AG04450 (cell line): ENCODE measurements at regions of chr10 and their contacts with region 1.

Region 1: GRCh38 chr10:110901954-110902819 is 16.8 kb downstream of the BBIP1 start:
- DNase-seq: no peak
- H3K4me3 ChIP-seq: no peak overlapping the region
- H3K27ac ChIP-seq: peak overlapping the region; percentile 21
- H3K27me3 ChIP-seq: no peaks in the 10 kb centered on the region
- CTCF ChIP-seq: no peak

Region 2: DNA sequence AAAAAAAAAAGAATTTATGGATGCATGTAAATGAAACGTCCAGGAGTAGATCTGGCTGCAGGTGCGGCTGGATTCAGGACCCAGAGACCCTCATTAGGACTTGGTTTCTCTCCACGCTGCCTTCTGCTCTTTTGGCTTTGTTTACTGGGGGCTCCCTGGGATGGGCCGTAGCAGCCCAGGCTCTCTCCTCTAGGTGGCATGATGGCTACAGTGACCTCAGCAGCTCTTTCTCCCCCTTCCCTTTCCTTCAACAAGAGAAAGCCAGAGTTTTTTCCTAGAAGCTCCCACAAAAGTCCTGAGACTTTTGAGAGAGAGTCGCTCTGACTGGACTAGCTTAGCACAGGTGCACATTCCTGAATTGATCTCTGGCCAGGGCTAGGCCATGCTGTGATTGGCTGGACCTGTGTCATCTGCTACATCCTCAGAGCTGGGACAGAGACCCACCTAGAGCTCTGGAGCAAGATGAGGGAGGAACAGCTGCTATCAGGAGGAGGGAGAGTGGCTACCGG is 98.3 kb before region 1 on chr10:
- CTCF ChIA-PET with region 1: interaction called, 14 read pairs
- POLR2A ChIA-PET with region 1: no interaction called
- DNase-seq: no peak
- H3K4me3 ChIP-seq: no peak overlapping the region
- H3K27ac ChIP-seq: no peak overlapping the region
- H3K27me3 ChIP-seq: peaks cover 7% of the 10 kb centered on the region
- CTCF ChIP-seq: peak; percentile 70

Region 3: GRCh38 chr10:110918643-110919363 is 16.6 kb after region 1 on chr10 and contains the start of gene BBIP1:
- CTCF ChIA-PET with region 1: interaction called, 13 read pairs
- POLR2A ChIA-PET with region 1: interaction called, 14 read pairs
- DNase-seq: peak; percentile 99
- H3K4me3 ChIP-seq: peak within 1 kb of the TSS; percentile 81
- H3K27ac ChIP-seq: peak within 1 kb of the TSS; percentile 98
- H3K27me3 ChIP-seq: no peaks in the 10 kb centered on the region
- CTCF ChIP-seq: no peak
- polyA plus RNA-seq, gene BBIP1: 29.9 and 41.5 TPM in 2 replicates